Tibial artery (tissue), 4 donors: ENCODE measurements at regions of chr9 and their contacts with region 1.

Region 1: DNA sequence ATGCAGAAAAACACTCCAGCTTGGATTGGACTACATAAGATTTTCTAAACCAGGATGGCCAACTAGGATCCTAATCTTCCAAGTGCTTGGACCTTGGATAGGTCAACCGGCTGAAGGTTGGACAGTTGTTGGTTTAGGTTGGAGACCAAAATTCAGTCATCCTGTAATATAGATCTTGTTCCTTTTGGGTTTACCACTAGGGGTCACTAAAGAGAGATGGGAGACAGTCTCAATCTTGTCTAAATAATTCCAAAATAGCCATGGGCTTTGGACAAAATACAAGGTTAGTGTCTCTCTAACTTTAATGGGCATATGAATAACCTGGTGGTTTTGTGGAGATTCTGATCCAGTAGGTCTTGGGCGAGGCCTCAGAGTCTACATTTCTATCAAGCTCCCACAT is 148.7 kb upstream of the ERCC6L2 start:
- DNase-seq: no peak
- H3K4me3 ChIP-seq: no peak overlapping the region
- H3K27ac ChIP-seq: no peak overlapping the region
- H3K4me1 ChIP-seq: peaks cover 0 to 4% (median 0%) of the 10 kb centered on the region in 4 donors
- H3K27me3 ChIP-seq: no peaks in the 10 kb centered on the region
- CTCF ChIP-seq: peak; percentile 79

Region 2: DNA sequence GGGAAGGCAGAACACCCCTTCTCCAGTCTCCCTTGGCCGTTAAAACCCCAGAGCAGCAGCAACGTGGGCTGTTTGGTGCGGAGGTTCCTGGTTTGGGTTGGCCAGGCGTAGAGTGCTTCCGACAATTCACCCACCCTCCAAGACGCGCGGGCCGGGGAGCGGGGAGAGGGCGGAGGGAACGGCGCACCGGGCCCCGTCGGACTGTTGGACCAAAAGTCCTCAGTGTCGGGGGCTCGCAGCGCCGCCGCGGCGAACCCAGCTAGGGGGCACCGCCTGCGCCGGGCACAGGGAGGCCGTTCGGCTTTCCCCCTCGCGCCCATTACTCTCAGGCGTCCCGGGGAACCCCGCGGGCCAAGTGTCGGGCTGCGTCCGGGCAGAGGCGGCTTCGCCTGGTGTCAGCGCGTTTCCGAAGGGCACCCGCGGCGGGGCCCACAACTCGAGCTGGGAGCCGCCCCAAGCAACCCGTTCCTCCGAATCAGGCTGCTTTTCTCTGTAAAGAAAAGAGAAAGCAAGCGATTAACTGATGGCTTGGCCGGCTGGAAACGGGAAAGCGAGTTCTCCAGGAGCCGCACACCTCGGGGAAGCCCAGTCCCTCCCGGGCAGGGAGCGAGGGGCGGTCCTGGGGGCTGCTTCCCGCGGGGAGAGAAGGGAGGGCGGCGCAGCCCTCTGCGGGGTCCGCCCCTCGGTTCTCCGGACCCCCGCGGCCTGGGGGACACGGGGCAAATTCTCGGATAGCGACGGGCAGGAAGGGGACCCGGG is 294.2 kb after region 1 on chr9:
- intact Hi-C with region 1: loop called (anchors 10 kb)
- DNase-seq: no peak
- H3K4me3 ChIP-seq: peak overlapping the region; percentile 57 to 76
- H3K27ac ChIP-seq: peak overlapping the region; percentile 66 to 70
- H3K4me1 ChIP-seq: peaks cover 0 to 25% (median 23%) of the 10 kb centered on the region in 4 donors
- H3K27me3 ChIP-seq: peaks cover 0 to 10% of the 10 kb centered on the region in 2 donors
- CTCF ChIP-seq: no peak

Region 3: DNA sequence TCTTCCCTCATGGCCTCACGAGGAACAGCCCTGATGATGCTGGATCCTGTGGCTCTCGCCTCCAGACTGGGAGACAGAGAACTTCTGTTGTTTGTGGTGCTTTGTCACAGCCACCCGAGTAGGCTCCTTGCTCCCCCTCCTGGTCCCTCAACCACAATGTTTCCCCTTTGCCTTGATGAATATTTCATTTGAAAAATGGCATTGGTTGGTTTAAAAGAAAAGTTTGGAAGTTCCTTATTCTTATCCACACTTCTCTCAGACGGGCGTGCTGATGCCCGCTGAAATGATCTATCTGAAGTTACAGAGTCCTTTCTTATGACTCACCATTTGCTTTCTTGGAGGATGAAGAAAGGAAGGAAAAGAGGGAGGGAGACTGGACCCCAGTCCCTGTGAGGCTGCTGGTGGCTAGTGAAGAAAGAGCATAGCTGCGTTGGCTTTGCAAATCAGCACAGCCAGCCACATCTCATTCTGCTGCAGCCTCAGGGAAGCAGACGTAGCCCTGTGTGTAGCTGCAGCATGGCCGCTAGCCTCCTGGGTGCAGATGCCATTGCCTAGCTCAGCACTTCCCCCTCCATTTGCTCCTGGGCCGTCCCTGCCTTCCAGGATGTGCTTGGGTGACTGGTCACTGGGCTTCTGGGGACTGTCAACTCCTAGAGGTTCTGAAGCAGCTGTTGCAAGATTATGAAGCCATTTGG is 334.7 kb after region 1 on chr9:
- intact Hi-C with region 1: loop called (anchors 10 kb)
- DNase-seq: peak in 1 of 2 donors; percentile 46
- H3K4me3 ChIP-seq: no peak overlapping the region
- H3K27ac ChIP-seq: peak overlapping the region; percentile 6 to 43
- H3K4me1 ChIP-seq: peaks cover 0 to 33% (median 22%) of the 10 kb centered on the region in 4 donors
- H3K27me3 ChIP-seq: no peaks in the 10 kb centered on the region
- CTCF ChIP-seq: peak; percentile 45 to 59

Region 4: DNA sequence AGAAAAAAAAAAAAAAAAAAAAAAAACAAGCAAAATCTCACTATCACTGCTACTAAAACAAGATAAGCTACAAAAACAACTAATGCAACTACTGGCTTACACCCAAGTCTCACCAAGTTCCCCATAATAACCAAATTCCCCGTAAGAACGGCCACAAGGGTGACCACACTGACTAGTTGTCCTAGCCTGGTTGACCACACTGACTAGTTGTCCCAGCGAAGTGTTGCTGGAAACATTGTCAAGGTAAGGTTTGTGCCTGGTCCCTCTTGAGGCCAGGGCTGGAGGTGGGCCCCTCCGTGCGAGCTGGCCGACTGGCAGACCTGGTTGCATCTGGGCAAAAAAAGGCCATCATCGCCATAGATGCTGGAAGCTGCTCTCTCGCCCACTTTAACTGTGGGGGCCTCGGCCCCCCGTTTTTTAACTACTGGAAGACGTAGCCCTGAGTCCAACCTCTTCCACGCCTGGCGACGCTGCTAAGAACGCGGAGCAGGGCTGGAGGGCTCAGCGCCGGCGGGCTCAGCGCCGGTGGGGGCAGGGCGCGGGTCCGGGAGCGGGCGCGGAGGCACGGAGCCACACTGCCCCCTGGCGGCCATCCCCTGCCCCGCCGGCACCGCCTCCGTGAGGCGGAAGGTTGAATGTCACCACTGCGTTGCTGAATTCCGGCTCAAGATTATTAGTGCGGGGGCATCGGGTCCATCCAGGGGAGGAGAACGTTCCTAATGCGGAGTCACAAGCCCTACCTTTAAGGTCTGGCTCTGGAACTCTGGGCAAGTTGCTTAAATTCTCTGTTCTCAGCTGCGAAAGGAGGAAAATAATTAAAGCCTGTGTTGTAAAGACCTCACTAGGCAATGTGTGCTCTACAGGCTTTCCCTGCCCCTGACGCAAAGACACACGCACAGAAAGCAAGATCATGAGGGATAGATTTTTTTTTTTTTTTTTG is 491.3 kb after region 1 on chr9:
- intact Hi-C with region 1: loop called (anchors 5 kb)
- DNase-seq: peak; percentile 64 to 85
- H3K4me3 ChIP-seq: peak overlapping the region; percentile 41 to 53
- H3K27ac ChIP-seq: peak overlapping the region; percentile 53 to 64
- H3K4me1 ChIP-seq: peaks cover 0 to 24% (median 18%) of the 10 kb centered on the region in 4 donors
- H3K27me3 ChIP-seq: peaks cover 0 to 7% of the 10 kb centered on the region in 2 donors
- CTCF ChIP-seq: peak; percentile 98 to 99